ENCODE measurements at regions of chr4 and their contacts with region 1.

Region 1: GRCh38 chr4:146833530-146833929 is 112.1 kb downstream of the TTC29 start:
- DNase-seq: no peak
- H3K4me3 Mint-ChIP-seq: no peak overlapping the region
- H3K27ac Mint-ChIP-seq: no peak overlapping the region
- H3K4me1 Mint-ChIP-seq: peaks cover 9% of the 10 kb centered on the region
- H3K27me3 Mint-ChIP-seq: no peaks in the 10 kb centered on the region
- CTCF ChIP-seq: no peak

Region 2: DNA sequence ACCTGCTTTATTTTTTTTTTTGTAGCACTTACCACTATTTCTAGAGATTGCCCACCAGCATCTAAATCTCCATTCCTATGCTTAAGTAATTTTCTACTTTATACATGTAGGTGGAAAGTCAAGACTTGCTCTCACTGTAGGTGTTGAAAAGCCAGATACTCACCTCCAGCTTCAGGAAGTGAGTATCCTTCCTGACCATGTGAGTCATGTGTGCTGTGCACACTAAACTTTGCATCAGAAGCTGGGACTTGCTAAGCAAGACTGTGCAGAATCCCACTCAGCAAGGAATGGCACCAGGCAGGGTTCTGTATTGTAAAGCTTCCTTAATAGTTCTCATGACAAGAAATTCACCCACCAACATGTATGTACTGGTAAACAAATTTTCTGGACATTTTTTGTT is 43.0 kb before region 1 on chr4:
- CTCF ChIA-PET with region 1: no interaction called
- intact Hi-C with region 1: loop called (anchors 5 kb)
- DNase-seq: peak; percentile 17
- H3K4me3 Mint-ChIP-seq: no peak overlapping the region
- H3K27ac Mint-ChIP-seq: no peak overlapping the region
- H3K4me1 Mint-ChIP-seq: peaks cover 8% of the 10 kb centered on the region
- H3K27me3 Mint-ChIP-seq: no peaks in the 10 kb centered on the region
- CTCF ChIP-seq: no peak